Tibial artery (tissue), 4 donors: ENCODE measurements at regions of chr5 and their contacts with region 1.

Region 1: GRCh38 chr5:1511651-1512540 is 11.9 kb downstream of the LPCAT1 start:
- DNase-seq: peak; percentile 17 to 53
- H3K4me3 ChIP-seq: no peak overlapping the region
- H3K27ac ChIP-seq: no peak overlapping the region
- H3K4me1 ChIP-seq: peaks cover 0 to under 1% (median 0%) of the 10 kb centered on the region in 4 donors
- H3K27me3 ChIP-seq: no peaks in the 10 kb centered on the region
- CTCF ChIP-seq: no peak

Region 2: GRCh38 chr5:1344975-1345838 is 166.7 kb before region 1 on chr5 and contains the start of gene CLPTM1L:
- intact Hi-C with region 1: loop called (anchors 10 kb)
- DNase-seq: peak; percentile 76 to 92
- H3K4me3 ChIP-seq: peak within 1 kb of the TSS; percentile 80 to 92
- H3K27ac ChIP-seq: peak within 1 kb of the TSS; percentile 81 to 84
- H3K4me1 ChIP-seq: peaks cover 0 to 24% (median 22%) of the 10 kb centered on the region in 4 donors
- H3K27me3 ChIP-seq: no peaks in the 10 kb centered on the region
- CTCF ChIP-seq: peak in 1 of 2 experiments; percentile 51

Region 3: GRCh38 chr5:1380011-1380817 is 131.7 kb before region 1 on chr5:
- intact Hi-C with region 1: no loop called
- DNase-seq: no peak
- H3K4me3 ChIP-seq: peak overlapping the region in 1 of 2 donors; percentile 33
- H3K27ac ChIP-seq: no peak overlapping the region
- H3K4me1 ChIP-seq: peaks cover 0 to 8% (median 5%) of the 10 kb centered on the region in 4 donors
- H3K27me3 ChIP-seq: peaks cover 0 to 74% of the 10 kb centered on the region in 2 donors
- CTCF ChIP-seq: peak; percentile 36 to 39

Region 4: DNA sequence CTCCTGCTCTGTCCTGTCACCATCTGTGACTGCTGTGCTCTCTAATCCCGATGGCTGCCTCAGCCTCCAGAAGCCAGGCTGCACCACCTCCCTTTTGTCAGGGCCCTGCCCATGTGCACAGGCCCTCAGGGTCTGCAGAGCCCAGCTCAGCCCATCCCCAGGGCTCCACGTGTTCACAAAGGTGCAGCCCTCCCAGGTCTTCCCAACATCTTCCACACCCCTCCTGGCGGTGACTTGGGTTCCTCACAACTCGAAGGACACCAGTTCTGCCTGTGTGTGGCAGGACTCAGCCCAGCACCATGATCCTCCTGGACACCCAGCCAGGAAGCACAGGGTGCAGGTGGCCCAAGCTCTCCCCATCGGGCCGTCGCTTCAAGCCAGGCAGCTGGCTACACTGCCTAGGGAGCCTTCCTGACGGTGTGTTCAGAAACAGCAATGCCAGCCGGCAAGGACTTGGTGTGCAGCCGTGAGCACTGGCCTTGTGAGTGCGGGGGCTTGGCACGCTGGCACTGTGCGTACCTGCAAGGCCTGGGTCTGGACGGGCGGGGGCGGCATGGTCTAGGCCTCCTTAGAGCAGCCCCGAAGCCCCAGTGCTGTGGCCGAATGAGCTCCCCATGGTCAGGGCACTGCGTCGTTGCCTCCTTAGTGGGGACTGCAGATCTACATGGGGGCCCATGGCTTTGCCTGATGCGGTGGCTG is 191.6 kb after region 1 on chr5:
- intact Hi-C with region 1: no loop called
- DNase-seq: no peak
- H3K4me3 ChIP-seq: no peak overlapping the region
- H3K27ac ChIP-seq: no peak overlapping the region
- H3K4me1 ChIP-seq: no peaks in the 10 kb centered on the region
- H3K27me3 ChIP-seq: peaks cover 0 to 10% of the 10 kb centered on the region in 2 donors
- CTCF ChIP-seq: no peak

Region 5: DNA sequence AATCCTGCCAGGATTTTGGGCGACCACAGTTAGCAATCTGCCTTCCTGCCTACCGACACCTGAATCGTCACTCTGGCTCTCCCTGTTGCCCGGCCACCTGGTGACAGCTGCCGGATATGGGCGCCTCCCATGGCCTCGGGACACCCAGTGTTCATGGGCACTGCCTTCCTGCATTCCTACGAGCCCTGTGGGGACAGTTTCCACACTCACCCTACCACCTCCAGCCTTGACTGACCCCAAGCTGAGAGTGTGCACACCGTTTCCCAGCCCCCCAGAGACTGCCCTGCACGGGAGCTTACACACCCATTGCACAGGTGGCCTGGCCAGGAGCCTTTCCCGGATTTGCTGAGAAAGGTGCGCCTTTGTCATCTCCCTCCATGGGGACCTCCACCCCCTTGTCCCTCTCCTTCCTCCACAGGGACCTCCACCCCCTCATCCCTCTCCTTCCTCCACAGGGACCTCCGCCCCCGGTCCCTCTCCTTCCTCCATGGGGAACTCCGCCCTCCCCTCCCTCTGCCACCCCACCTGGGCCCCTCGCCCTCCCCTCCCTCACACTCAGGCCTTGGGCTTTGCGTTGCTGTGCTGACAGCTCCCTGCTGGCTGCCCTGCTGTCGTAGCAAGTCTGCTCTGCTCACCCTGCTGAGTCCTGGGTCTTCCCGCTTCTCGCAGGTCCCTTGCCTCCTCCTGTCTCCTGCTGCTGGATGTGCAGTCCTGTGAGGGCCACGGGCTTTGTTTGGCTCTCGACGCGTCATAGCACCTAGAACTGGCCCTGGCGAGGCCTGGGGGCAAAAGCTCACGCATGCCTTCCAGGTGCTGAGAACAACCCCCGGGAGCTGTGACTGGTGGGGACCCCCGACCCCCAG is 239.4 kb after region 1 on chr5:
- intact Hi-C with region 1: no loop called
- DNase-seq: peak in 1 of 2 donors; percentile 10
- H3K4me3 ChIP-seq: no peak overlapping the region
- H3K27ac ChIP-seq: no peak overlapping the region
- H3K4me1 ChIP-seq: no peaks in the 10 kb centered on the region
- H3K27me3 ChIP-seq: peaks cover 0 to 10% of the 10 kb centered on the region in 2 donors
- CTCF ChIP-seq: no peak